ENCODE measurements at regions of chr1 and their contacts with region 1.

Region 1: DNA sequence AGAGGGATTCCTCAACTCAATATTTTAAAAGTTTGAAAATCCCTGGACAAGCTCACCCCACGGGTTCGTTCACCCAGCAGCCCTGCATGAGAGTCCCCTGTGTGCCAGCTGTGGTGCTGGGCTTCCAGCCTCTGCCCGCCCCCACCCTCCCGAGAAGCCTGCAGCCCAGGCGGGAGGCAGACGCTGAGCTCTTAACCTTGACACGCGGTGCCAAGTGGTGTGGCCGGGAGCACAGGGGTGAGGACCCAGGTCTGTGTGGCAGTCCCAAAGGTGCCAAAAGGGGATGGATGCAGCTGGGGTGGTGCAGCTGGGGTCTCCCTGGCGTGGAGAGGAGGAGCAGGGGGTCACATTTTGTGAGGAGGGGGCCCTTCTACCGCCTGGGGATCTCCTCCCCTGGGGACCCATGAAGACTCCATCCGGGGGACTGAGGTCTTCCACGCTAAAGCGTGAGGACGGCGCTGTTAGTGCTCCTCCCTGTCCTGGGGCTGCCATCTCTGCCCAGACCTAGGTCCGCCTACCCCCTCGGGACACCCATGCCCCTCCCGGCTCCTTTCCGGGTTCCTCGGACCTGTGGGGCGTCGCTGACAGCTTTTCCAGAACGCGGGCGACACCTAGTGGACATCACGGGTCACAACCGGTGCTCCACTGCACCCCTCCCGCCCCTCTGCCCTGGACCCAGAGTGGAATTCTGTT is 12.9 kb downstream of the PLA2G2F start:
- DNase-seq: peak; percentile 93
- H3K4me3 ChIP-seq: peak overlapping the region; percentile 27 to 54 (median 42)
- H3K27ac ChIP-seq: peak overlapping the region in 3 of 4 donors; percentile 13 to 42 (median 32)
- H3K4me1 ChIP-seq: peaks cover 0 to 25% (median 13%) of the 10 kb centered on the region in 4 donors
- H3K27me3 ChIP-seq: no peaks in the 10 kb centered on the region
- CTCF ChIP-seq: peak; percentile 93 to 97 (median 94)
- EP300 ChIP-seq: no peak
- POLR2A ChIP-seq: no peak

Region 2: DNA sequence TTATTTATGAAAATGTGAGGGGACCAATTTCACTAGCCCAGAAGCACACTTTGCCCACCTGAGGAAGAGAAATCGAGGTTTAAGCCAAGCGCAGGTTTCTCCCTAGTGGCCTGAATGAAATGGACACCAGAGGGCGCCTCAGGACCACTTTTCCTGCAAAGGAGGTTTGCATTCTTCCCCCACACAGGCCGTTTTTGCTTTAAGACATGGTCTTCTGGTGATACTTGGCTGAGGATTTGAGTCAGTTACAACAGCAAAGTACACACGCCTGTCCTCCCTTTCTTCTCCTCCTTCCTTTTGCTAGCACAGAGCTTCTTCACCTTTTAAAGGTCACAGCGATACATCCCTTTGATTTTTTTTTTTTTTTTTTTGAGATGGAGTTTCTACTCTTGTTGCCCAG is 234.0 kb before region 1 on chr1:
- intact Hi-C with region 1: loop called (anchors 1 kb)
- DNase-seq: peak; percentile 89
- H3K4me3 ChIP-seq: no peak overlapping the region
- H3K27ac ChIP-seq: no peak overlapping the region
- H3K4me1 ChIP-seq: no peaks in the 10 kb centered on the region
- H3K27me3 ChIP-seq: no peaks in the 10 kb centered on the region
- CTCF ChIP-seq: peak; percentile 72 to 88 (median 85)
- EP300 ChIP-seq: no peak
- POLR2A ChIP-seq: no peak

Region 3: DNA sequence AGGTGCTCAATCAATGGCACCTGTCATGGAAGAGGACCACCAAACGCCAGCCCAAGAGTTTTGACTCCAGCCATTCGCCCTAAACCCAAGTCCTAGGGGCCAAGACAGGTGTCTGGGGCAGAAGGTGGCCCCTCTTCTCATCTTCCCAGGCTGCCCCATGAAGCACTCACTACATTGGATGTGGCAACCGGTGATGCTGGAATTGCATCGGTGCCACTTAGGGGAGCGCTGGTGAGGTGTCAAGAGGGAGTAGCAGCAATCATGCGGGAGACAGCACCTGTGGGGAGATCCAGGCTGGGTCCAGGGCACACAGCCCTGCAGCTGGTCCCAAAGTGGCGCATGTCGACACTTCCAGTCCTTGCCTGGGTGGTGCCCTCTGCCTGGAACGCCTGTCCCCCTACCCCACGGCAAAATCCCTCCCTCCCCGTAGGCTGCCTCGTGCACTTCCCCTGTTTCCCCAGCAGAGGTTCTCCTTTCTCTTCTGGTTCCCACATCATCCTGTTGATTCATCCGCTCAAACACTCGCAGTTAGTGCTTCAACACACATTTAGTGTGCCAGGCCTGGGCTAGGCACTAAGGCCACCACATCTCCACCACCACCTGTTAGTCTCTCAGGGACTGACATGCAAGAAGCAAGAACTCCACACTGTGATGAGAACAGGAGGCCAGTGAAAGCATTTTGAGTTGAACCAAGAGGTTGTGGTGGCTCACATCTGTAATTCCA is 51.3 kb before region 1 on chr1:
- intact Hi-C with region 1: loop called (anchors 2 kb)
- DNase-seq: peak; percentile 70
- H3K4me3 ChIP-seq: no peak overlapping the region
- H3K27ac ChIP-seq: no peak overlapping the region
- H3K4me1 ChIP-seq: peaks cover 0 to 11% (median 2%) of the 10 kb centered on the region in 4 donors
- H3K27me3 ChIP-seq: no peaks in the 10 kb centered on the region
- CTCF ChIP-seq: peak; percentile 86 to 90 (median 88)
- EP300 ChIP-seq: no peak
- POLR2A ChIP-seq: no peak

Region 4: DNA sequence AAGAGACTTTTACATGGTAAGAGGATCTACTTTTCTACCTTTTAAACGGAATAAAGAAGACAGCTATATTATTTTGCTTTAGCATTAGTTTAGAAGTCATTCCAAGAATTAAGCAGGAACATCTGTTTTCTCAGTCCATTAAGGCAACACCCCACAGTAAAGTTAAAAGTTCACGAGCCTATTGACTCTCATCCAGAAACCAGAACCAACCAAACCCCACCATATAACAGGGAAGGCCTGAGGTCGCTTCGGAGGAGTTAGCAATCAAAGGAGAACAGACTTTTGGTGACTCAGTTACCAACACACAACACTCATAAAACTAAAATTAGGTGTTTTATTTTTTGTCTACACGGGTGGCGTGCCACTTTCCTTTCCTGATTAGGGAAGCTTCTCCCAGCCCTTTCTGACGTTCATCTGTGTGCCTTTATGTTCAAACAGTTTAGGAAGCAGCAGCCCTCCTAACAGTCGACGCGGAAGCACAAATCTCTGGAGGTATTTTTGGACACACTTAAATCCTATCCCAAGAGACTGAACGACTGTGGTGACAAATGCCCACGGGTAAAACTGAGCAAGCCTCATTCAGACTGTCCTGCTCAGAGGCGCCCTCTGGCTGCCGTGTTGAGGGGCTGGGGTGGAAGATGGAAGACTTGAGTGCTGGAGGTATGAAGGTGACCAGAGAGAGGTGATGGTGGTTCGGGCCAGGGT is 42.9 kb after region 1 on chr1:
- intact Hi-C with region 1: loop called (anchors 5 kb)
- DNase-seq: peak; percentile 83
- H3K4me3 ChIP-seq: peak overlapping the region in 1 of 4 donors; percentile 8
- H3K27ac ChIP-seq: peak overlapping the region in 3 of 4 donors; percentile 95 to 99 (median 98)
- H3K4me1 ChIP-seq: peaks cover 0 to 59% (median 47%) of the 10 kb centered on the region in 4 donors
- H3K27me3 ChIP-seq: no peaks in the 10 kb centered on the region
- CTCF ChIP-seq: peak; percentile 74 to 83 (median 79)
- EP300 ChIP-seq: no peak
- POLR2A ChIP-seq: no peak